A549 (cell line): ENCODE measurements at regions of chr15 and their contacts with region 1.

Region 1: GRCh38 chr15:80173022-80173759 is 20.4 kb downstream of the FAH start:
- DNase-seq: peak; percentile 74 to 79
- ATAC-seq: peak; percentile 84 to 93
- H3K4me3 ChIP-seq: no peak overlapping the region
- H3K27ac ChIP-seq: no peak overlapping the region
- H3K4me1 ChIP-seq: no peaks in the 10 kb centered on the region
- CTCF ChIP-seq: peak; percentile 73
- EP300 ChIP-seq: no peak
- POLR2A ChIP-seq: no peak
- RAD21 ChIP-seq: peak; percentile 89 to 95

Region 2: DNA sequence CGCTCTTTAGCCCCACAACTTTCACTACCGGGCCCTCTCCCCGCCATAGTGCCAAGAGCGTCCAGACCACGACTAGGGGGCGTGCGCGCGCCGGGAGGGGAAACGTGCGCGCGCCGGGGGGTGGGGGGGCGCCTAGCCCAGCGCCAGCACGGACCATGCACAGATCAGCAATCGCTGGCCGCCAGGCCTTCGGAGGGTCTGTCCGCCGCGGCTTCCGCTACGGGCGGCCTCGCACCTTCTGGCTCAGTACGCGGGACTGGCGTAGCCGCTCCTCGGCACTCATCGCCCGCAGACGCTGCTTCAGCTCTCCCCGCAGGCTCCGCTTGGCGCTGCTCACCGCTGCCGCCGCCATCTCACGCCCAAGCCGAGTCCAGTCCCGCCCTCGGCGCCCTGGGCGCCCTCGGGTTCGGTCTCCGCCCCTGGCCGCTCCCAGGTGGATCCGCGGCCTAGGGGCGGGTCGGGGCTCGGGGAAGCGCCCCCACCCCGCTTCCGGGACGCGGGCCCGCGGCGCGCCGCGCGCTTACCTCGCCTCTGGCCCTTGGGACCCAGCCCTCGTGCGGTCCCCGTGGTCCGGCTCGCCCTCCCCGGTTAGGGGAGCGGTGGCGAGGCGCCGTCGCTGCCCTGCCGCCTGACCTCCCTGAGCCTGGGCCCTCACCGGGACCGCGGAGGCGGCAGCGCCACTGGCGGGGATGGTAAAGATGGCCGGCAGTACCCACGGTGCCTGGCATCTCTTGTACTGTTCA is 276.4 kb before region 1 on chr15 and contains the start of gene MTHFS:
- CTCF ChIA-PET with region 1: interaction called, 10 read pairs
- POLR2A ChIA-PET with region 1: no interaction called
- DNase-seq: peak; percentile 83 to 92
- ATAC-seq: peak; percentile 96 to 98
- H3K4me3 ChIP-seq: peak within 1 kb of the TSS; percentile 65
- H3K27ac ChIP-seq: peak within 1 kb of the TSS; percentile 93 to 98
- H3K4me1 ChIP-seq: peaks cover 37% of the 10 kb centered on the region
- CTCF ChIP-seq: peak; percentile 74
- EP300 ChIP-seq: no peak
- POLR2A ChIP-seq: peak; percentile 95
- RAD21 ChIP-seq: peak; percentile 60 to 85
- polyA plus RNA-seq, gene MTHFS: 125 and 158 TPM in 2 replicates

Region 3: GRCh38 chr15:80160570-80161156 is 12.5 kb before region 1 on chr15:
- CTCF ChIA-PET with region 1: interaction called, 36 read pairs
- POLR2A ChIA-PET with region 1: no interaction called
- DNase-seq: peak in 1 of 2 experiments; percentile 68
- ATAC-seq: peak; percentile 49 to 83
- H3K4me3 ChIP-seq: no peak overlapping the region
- H3K27ac ChIP-seq: peak overlapping the region; percentile 54 to 81
- H3K4me1 ChIP-seq: peaks cover 19% of the 10 kb centered on the region
- CTCF ChIP-seq: no peak
- EP300 ChIP-seq: no peak
- POLR2A ChIP-seq: no peak
- RAD21 ChIP-seq: no peak

Region 4: GRCh38 chr15:80183886-80184285 is 10.7 kb after region 1 on chr15:
- CTCF ChIA-PET with region 1: interaction called, 11 read pairs
- POLR2A ChIA-PET with region 1: no interaction called
- DNase-seq: peak in 1 of 2 experiments; percentile 36
- ATAC-seq: peak in 1 of 2 experiments; percentile 52; a peak in 1 of 6 replicates
- H3K4me3 ChIP-seq: no peak overlapping the region
- H3K27ac ChIP-seq: no peak overlapping the region
- H3K4me1 ChIP-seq: peaks cover 9% of the 10 kb centered on the region
- CTCF ChIP-seq: peak; percentile 22; the same call in 2 of the 3 replicates
- EP300 ChIP-seq: no peak
- POLR2A ChIP-seq: no peak
- RAD21 ChIP-seq: peak; percentile 10 to 33; a peak in 2 of 5 replicates

Region 5: DNA sequence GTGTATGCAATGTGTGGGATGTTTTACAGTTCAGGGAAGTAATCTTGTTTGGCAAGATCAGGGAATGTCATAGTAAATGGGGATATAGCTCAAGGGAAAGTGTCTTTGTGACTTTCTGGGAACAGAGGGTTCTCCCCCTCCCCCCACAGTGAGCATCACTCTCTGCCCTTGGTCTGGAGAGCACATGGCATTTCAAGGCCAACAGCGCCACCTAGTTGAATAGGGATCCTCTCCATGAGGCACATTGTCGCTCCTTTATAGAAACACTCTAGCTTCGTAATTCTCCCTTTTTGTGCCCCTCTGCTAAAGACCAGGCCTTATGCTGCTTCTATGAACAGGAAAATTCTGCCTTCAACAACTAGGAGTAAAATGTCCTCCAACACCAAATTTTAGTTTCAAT is 193.9 kb after region 1 on chr15:
- CTCF ChIA-PET with region 1: no interaction called
- POLR2A ChIA-PET with region 1: no interaction called
- DNase-seq: peak; percentile 24 to 77
- ATAC-seq: peak; percentile 54 to 90; a peak in 3 of 6 replicates
- H3K4me3 ChIP-seq: no peak overlapping the region
- H3K27ac ChIP-seq: no peak overlapping the region
- H3K4me1 ChIP-seq: no peaks in the 10 kb centered on the region
- CTCF ChIP-seq: peak; percentile 45
- EP300 ChIP-seq: no peak
- POLR2A ChIP-seq: no peak
- RAD21 ChIP-seq: peak; percentile 61 to 82